ENCODE measurements at regions of chrX and their contacts with region 1.

Region 1: GRCh38 chrX:47430925-47431324 is 52.1 kb downstream of the ZNF41 start:
- DNase-seq: no peak
- ATAC-seq: no peak
- H3K4me3 ChIP-seq: no peak overlapping the region
- H3K4me3 Mint-ChIP-seq: no peak overlapping the region
- H3K27ac ChIP-seq: no peak overlapping the region
- H3K27ac Mint-ChIP-seq: no peak overlapping the region
- H3K4me1 ChIP-seq: no peaks in the 10 kb centered on the region
- H3K4me1 Mint-ChIP-seq: no peaks in the 10 kb centered on the region
- H3K27me3 ChIP-seq: no peaks in the 10 kb centered on the region
- H3K27me3 Mint-ChIP-seq: peaks cover 0 to 13% of the 10 kb centered on the region in 2 donors

Region 2: DNA sequence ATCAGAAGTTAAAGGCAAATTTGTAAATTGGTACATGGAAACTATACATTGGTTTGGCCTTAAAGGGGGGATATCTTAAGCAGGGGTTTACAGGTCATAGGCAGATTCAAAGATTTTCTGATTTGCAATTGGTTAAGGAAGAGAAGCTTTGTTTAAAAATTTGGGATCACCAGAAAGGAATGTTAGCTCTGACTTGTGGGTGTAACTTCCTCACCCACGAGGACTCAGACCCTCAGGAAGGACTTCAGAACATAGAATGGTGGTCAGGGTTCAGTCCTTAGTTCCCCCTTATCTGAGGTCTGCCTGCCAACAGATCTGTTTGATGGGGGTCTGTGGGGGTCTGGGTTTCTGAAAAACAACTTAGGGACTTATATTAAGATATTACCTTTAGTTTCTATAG is 1802.9 kb before region 1 on chrX:
- CTCF ChIA-PET with region 1: no interaction called
- POLR2A ChIA-PET with region 1: no interaction called
- DNase-seq: no peak
- ATAC-seq: no peak
- H3K4me3 ChIP-seq: no peak overlapping the region
- H3K4me3 Mint-ChIP-seq: no peak overlapping the region
- H3K27ac ChIP-seq: no peak overlapping the region
- H3K27ac Mint-ChIP-seq: no peak overlapping the region
- H3K4me1 ChIP-seq: no peaks in the 10 kb centered on the region
- H3K4me1 Mint-ChIP-seq: no peaks in the 10 kb centered on the region
- H3K27me3 ChIP-seq: peaks cover 0 to 2% of the 10 kb centered on the region in 2 experiments
- H3K27me3 Mint-ChIP-seq: peaks cover 0 to 8% of the 10 kb centered on the region in 2 donors

Region 3: DNA sequence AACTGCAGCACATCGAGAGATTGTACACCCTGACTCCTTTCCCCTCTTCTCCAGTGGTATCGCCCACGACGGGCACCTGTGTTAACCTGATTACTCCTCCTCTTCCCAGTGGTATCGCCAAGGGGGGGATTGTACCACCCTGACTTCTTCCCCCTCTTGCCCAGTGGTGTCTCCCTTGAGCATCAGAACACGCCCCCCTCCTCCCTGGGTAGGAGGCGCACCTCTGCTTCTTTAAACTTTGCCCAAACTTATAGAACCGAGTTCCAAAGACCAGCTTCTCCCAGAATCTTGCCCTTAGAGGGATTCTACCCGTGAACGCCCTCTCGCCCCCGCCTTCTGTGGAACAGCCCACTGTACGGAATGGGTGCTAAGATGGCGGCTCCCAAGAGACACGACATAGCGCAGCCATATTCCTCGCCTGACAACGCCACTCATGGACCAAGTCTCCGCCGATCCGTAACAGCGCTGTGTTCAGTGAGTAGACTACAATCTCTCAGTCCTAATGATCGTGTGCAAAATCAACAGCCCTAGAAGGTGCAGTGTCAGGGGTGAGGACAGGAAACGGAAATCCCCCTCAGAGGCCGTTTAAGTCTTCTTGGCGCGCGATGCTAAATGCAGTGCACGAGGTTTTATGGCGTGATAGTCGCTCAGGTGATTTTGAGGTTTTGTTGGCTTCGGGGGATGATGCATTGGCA is 64.8 kb before region 1 on chrX:
- CTCF ChIA-PET with region 1: no interaction called
- POLR2A ChIA-PET with region 1: interaction called in 1 of 2 experiments, 12 read pairs
- DNase-seq: peak; percentile 55 to 86 (median 72)
- ATAC-seq: peak; percentile 90 to 96 (median 93)
- H3K4me3 ChIP-seq: peak overlapping the region; percentile 62 to 68
- H3K4me3 Mint-ChIP-seq: peak overlapping the region; percentile 81 to 91 (median 90)
- H3K27ac ChIP-seq: peak overlapping the region; percentile 79
- H3K27ac Mint-ChIP-seq: peak overlapping the region; percentile 93 to 96
- H3K4me1 ChIP-seq: peaks cover 0 to 20% of the 10 kb centered on the region in 2 experiments
- H3K4me1 Mint-ChIP-seq: peaks cover 12 to 22% (median 21%) of the 10 kb centered on the region in 3 donors
- H3K27me3 ChIP-seq: no peaks in the 10 kb centered on the region
- H3K27me3 Mint-ChIP-seq: peaks cover 0 to 4% of the 10 kb centered on the region in 2 donors

Region 4: GRCh38 chrX:47458528-47458927 is 27.6 kb after region 1 on chrX:
- CTCF ChIA-PET with region 1: no interaction called
- POLR2A ChIA-PET with region 1: no interaction called
- DNase-seq: peak in 18 of 35 experiments; percentile 1 to 47 (median 13)
- ATAC-seq: peak in 1 of 4 experiments; percentile 54
- H3K4me3 ChIP-seq: no peak overlapping the region
- H3K4me3 Mint-ChIP-seq: no peak overlapping the region
- H3K27ac ChIP-seq: no peak overlapping the region
- H3K27ac Mint-ChIP-seq: peak overlapping the region in 1 of 2 donors; percentile 13
- H3K4me1 ChIP-seq: peaks cover 0 to 7% of the 10 kb centered on the region in 2 experiments
- H3K4me1 Mint-ChIP-seq: peaks cover 2 to 8% (median 7%) of the 10 kb centered on the region in 3 donors
- H3K27me3 ChIP-seq: no peaks in the 10 kb centered on the region
- H3K27me3 Mint-ChIP-seq: no peaks in the 10 kb centered on the region

Measured in T-cell (primary cell).